ENCODE measurements at regions of chr9 and their contacts with region 1.

Region 1: DNA sequence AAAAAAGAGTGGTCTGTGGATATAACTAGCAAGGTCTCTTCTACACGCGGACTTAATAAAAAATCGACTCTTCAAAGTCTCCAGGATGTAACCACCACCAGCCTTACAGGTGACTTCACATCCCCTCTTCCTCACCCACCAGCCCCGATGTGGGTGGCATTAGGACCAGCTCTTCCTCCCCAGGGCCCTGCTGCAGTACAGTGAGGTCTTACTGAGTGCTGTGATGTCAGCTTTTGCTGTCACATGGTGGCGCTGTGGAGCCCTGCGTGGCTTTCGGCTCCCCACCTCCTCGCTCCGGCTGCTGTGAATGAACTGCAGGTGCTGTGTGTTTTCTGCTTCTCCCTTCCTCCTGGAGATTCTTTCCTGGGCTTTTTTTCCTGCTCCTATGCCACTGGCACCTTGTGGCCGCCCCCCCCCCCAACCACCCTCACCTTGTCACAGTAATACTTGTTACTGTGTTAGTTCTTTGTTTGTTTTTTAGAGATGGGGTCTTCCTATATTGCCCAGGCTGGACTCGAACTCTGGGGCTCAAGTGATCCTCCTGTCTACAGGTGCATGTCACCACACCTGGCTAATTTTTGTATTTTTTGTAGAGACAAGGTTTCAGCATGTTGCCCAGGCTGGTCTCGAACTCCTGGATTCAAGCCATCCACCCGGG is 15.8 kb upstream of the RAPGEF1 start:
- DNase-seq: peak; percentile 88
- ATAC-seq: peak; percentile 98
- H3K4me3 ChIP-seq: no peak overlapping the region
- H3K27ac ChIP-seq: no peak overlapping the region
- H3K4me1 ChIP-seq: peaks cover 5% of the 10 kb centered on the region
- H3K27me3 ChIP-seq: peaks cover 41% of the 10 kb centered on the region
- CTCF ChIP-seq: peak; percentile 73

Region 2: DNA sequence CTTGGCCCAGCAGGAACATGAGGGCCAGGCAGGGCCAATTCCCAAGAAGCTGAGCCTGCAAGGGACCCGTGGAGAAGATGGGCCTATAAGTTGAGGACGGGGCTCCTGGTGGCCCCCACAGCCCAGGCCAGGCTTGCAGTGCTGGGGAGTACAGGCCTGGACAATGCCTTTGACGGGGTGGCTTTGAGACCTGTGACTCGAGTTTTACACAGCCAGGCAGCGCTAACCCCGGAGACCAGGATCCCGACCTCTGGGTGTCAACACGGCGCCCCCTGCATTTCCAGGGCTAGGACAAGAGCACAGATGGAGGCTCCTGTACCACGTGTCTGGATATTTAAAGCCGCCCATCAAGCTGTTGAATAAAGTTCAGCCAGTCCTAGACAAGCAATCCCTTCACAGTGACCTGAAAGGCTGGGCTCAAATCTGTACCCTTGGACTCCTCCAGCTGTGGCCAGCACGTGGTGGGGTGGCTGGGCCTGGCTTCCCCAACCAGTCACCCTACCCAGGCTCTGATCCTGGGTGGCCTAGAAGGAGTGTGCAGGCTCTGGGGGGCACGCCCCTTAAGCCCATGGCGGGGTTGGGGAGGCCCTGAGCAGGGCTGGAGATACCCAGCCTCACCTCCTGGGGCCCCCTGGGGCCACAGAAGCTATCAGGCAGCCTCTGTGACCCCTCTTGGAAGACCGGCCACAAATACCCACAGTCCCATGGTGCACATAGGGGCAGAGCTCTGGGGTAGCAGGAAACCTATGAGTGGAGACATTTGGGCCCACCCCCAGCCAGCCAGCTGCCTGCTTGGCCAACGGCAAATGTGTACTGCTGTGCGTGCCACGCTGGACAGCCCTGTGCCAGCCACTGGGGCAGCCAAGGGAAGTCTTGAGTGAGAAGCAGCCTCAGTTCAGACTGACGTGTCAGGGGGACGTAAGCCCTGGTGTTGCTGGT is 494.9 kb after region 1 on chr9:
- intact Hi-C with region 1: loop called (anchors 5 kb)
- DNase-seq: no peak
- ATAC-seq: peak; percentile 9
- H3K4me3 ChIP-seq: no peak overlapping the region
- H3K27ac ChIP-seq: no peak overlapping the region
- H3K4me1 ChIP-seq: peaks cover 4% of the 10 kb centered on the region
- H3K27me3 ChIP-seq: peaks cover 14% of the 10 kb centered on the region
- CTCF ChIP-seq: no peak